Psoas muscle (tissue), 8 donors: ENCODE measurements at regions of chr18 and their contacts with region 1.

Region 1: GRCh38 chr18:32470713-32471633 is at the start of gene GAREM1:
- DNase-seq: peak; percentile 95 to 98
- ATAC-seq: peak; percentile 93 to 97 (median 96)
- H3K4me3 ChIP-seq: peak within 1 kb of the TSS; percentile 78
- H3K27ac ChIP-seq: peak within 1 kb of the TSS; percentile 79
- H3K4me1 ChIP-seq: peaks cover 13% of the 10 kb centered on the region
- H3K27me3 ChIP-seq: no peaks in the 10 kb centered on the region
- CTCF ChIP-seq: peak; percentile 89
- total RNA-seq, gene GAREM1: 7.2 to 10.3 (median 9.5) TPM

Region 2: GRCh38 chr18:32158108-32158624 is 312.8 kb before region 1 on chr18:
- intact Hi-C with region 1: loop called (anchors 2 to 10 kb)
- DNase-seq: peak; percentile 71 to 84
- ATAC-seq: peak; percentile 95 to 100 (median 98)
- H3K4me3 ChIP-seq: peak overlapping the region; percentile 46
- H3K27ac ChIP-seq: no peak overlapping the region
- H3K4me1 ChIP-seq: peaks cover 6% of the 10 kb centered on the region
- H3K27me3 ChIP-seq: no peaks in the 10 kb centered on the region
- CTCF ChIP-seq: peak; percentile 83

Region 3: GRCh38 chr18:32289483-32290075 is 181.4 kb before region 1 on chr18:
- intact Hi-C with region 1: loop called (anchors 5 kb)
- DNase-seq: no peak
- ATAC-seq: peak; percentile 69 to 88 (median 80)
- H3K4me3 ChIP-seq: no peak overlapping the region
- H3K27ac ChIP-seq: no peak overlapping the region
- H3K4me1 ChIP-seq: no peaks in the 10 kb centered on the region
- H3K27me3 ChIP-seq: no peaks in the 10 kb centered on the region
- CTCF ChIP-seq: peak; percentile 67

Region 4: DNA sequence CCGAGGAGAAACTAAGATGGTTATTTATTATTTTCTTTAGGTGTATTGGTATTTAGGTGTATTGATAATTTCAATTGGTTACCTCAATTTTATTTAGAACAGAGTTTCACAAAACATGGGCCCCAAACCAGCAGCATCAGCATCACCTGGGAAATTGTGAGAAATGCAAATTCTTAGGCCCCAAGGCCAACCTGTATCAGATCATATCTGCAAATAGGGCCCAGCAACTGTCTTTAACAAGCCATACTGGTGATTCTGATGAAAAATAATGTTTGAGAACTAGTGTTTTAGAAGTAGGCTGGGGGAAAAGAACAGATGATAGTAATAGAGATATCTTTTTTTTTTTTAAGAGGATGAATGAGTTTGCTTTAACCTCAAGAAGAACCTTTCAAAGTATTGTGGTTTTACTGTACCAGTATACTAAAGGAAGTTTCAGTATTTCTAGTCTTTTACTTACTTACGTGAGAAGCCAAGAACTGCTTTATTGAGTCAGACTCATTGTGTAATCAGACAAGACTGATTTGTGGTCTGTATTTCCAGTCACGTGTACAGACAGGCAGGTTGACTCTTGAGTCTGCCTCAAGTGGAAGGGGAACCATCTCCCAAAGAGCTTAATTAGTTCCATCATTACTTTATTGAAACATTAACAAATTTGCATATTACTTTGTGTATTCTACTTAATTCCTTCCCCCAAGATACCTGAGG is 60.1 kb after region 1 on chr18:
- intact Hi-C with region 1: loop called in 1 of 2 experiments (anchors 5 kb)
- DNase-seq: no peak
- ATAC-seq: no peak
- H3K4me3 ChIP-seq: no peak overlapping the region
- H3K27ac ChIP-seq: no peak overlapping the region
- H3K4me1 ChIP-seq: no peaks in the 10 kb centered on the region
- H3K27me3 ChIP-seq: no peaks in the 10 kb centered on the region
- CTCF ChIP-seq: no peak